SK-N-SH (cell line): ENCODE measurements at regions of chr3 and their contacts with region 1.

Region 1: DNA sequence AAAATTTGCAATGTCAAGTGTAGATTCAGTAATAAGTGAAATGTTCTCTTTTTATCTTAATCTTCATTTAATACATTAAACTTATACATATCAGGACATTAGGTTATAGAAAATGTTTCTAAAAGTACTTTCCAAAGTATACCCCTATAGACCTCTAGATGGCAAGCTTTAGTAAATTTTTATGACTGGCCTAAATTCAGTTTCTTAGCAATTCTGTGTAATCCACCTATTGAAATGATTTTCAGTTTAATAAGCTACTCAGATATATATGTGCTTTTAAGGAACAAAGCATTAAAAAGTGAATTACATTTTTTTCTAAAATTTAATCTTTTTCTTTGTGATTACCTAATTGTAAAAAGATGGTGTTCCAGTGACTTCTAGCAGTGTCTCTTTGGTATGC is 342.2 kb downstream of the GBE1 start:
- DNase-seq: peak; percentile 36
- H3K4me3 ChIP-seq: no peak overlapping the region
- H3K27ac ChIP-seq: no peak overlapping the region
- H3K4me1 ChIP-seq: no peaks in the 10 kb centered on the region
- H3K27me3 ChIP-seq: no peaks in the 10 kb centered on the region
- CTCF ChIP-seq: peak; percentile 73
- EP300 ChIP-seq: no peak
- RAD21 ChIP-seq: peak; percentile 74

Region 2: GRCh38 chr3:81302045-81302444 is 117.2 kb before region 1 on chr3:
- CTCF ChIA-PET with region 1: interaction called, 13 read pairs
- POLR2A ChIA-PET with region 1: no interaction called
- DNase-seq: peak; percentile 77
- H3K4me3 ChIP-seq: no peak overlapping the region; a peak in 1 of 4 replicates
- H3K27ac ChIP-seq: peak overlapping the region in 1 of 2 experiments; percentile 82; a peak in 1 of 4 replicates
- H3K4me1 ChIP-seq: peaks cover 0 to 7% of the 10 kb centered on the region in 2 experiments; a peak in 2 of 4 replicates
- H3K27me3 ChIP-seq: no peaks in the 10 kb centered on the region
- CTCF ChIP-seq: peak; percentile 83
- EP300 ChIP-seq: peak in 1 of 2 experiments; percentile 97; a peak in 2 of 4 replicates
- RAD21 ChIP-seq: peak; percentile 87

Region 3: DNA sequence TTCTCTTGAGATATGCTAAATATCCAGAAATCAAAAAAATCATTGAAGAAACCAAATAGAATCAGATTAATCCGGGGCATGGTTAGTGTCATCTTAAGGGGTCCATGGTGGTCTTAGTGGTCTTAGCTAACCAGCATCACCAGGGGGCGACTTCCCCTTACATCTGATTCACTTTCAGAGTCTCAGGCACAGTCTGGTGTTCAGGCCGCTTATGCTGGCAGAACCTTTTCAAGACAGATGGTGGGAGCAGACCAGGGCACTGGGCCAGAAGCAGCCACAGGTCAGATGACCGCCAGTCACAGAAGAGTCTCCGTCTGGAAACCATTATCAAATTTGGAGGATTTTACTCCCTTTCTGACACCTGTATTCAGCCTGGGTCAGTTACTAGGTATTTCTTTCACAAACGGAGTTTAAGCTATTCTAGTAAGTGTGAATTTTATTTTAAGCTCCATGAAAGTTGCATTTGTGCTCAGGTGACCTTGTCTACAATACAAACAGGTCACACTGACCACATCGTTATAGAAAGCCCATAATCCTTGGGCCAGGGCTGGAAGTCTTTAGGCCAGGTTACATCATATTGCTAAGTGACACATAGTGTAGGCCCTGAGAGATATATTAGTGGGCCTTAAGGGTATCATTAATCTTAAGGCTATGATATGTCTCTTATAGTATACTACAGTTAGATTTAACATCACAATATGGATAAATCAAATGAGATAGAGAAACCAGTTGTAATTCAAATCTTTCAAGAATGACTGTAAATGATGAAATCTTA is 23.3 kb before region 1 on chr3:
- CTCF ChIA-PET with region 1: interaction called, 11 read pairs
- POLR2A ChIA-PET with region 1: no interaction called
- DNase-seq: peak; percentile 39
- H3K4me3 ChIP-seq: no peak overlapping the region
- H3K27ac ChIP-seq: no peak overlapping the region
- H3K4me1 ChIP-seq: peaks cover 0 to 7% of the 10 kb centered on the region in 2 experiments; a peak in 1 of 4 replicates
- H3K27me3 ChIP-seq: no peaks in the 10 kb centered on the region
- CTCF ChIP-seq: peak; percentile 14; the same call in 1 of the 2 replicates
- EP300 ChIP-seq: no peak; a peak in 1 of 4 replicates
- RAD21 ChIP-seq: peak; percentile 54

Region 4: DNA sequence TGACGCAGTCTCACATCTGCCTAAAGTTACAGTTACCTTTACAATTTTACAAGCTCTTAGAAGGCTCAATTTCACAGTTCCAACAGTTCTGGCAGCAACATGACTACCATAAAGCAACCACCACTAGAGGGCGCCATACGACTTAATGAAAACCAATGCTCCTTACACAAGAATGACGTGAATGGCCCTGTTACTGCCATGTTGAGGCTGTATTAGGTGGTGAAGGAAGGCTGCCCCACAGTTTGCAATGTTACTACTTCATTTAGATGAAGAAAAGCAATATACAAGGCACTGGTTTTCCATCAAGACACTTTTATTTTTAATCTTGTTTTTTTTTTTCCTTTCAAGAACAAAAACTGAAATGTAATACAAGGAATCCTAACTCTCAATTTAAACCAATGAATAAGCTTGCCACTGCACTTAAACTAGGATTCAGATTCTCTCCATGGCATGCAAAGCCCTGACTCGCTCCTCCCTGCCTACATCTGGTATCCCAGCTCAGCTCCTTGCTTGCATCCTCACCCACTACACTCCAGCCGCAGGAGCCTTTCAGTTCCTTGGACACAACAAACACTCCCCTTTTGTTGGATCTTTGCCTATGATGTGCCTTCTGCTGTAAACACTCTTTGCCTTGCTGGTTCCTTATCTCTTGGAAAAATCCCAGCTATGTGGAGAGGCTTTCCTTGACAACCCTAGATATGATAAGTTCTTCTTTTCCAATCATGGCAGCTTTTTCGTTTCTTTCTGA is 71.5 kb after region 1 on chr3:
- CTCF ChIA-PET with region 1: interaction called, 23 read pairs
- POLR2A ChIA-PET with region 1: no interaction called
- DNase-seq: peak; percentile 41
- H3K4me3 ChIP-seq: no peak overlapping the region
- H3K27ac ChIP-seq: no peak overlapping the region
- H3K4me1 ChIP-seq: no peaks in the 10 kb centered on the region; a peak in 3 of 4 replicates
- H3K27me3 ChIP-seq: no peaks in the 10 kb centered on the region
- CTCF ChIP-seq: peak; percentile 81
- EP300 ChIP-seq: no peak
- RAD21 ChIP-seq: peak; percentile 82

Region 5: DNA sequence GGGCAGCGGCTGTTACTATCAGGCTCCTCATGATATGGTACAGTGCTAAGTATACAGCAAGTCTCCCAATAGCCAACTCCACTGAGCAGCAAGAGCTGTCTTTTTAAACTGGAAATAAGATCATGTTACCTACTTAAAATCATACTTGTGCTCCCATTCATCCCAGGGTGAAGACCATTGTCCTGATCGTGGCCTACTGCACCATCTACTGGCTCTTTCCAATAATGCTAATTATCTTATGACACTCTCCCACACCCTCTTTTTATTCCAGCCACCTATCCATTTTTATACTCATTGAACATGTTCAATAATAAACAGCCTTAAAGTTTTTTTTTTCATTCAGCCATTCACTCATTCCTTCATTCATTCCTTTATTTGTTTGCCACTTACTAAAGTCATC is 224.5 kb after region 1 on chr3:
- CTCF ChIA-PET with region 1: interaction called, 26 read pairs
- POLR2A ChIA-PET with region 1: no interaction called
- DNase-seq: peak; percentile 17
- H3K4me3 ChIP-seq: no peak overlapping the region
- H3K27ac ChIP-seq: no peak overlapping the region
- H3K4me1 ChIP-seq: no peaks in the 10 kb centered on the region
- H3K27me3 ChIP-seq: no peaks in the 10 kb centered on the region
- CTCF ChIP-seq: peak; percentile 56
- EP300 ChIP-seq: no peak
- RAD21 ChIP-seq: peak; percentile 79